ENCODE measurements at regions of chr5 and their contacts with region 1.

Region 1: GRCh38 chr5:17180957-17181723 is 36.3 kb upstream of the BASP1 start:
- DNase-seq: peak; percentile 74
- H3K4me3 ChIP-seq: no peak overlapping the region
- H3K27ac ChIP-seq: peak overlapping the region; percentile 25
- H3K4me1 ChIP-seq: peaks cover 9% of the 10 kb centered on the region
- H3K27me3 ChIP-seq: no peaks in the 10 kb centered on the region
- CTCF ChIP-seq: no peak
- POLR2A ChIP-seq: no peak

Region 2: GRCh38 chr5:17157916-17158529 is 23.1 kb before region 1 on chr5:
- CTCF ChIA-PET with region 1: no interaction called
- POLR2A ChIA-PET with region 1: no interaction called
- dilution Hi-C with region 1: no loop called
- intact Hi-C with region 1: loop called (anchors 1 kb)
- DNase-seq: peak; percentile 69
- H3K4me3 ChIP-seq: no peak overlapping the region
- H3K27ac ChIP-seq: no peak overlapping the region
- H3K4me1 ChIP-seq: peaks cover 18% of the 10 kb centered on the region
- H3K27me3 ChIP-seq: no peaks in the 10 kb centered on the region
- CTCF ChIP-seq: no peak
- POLR2A ChIP-seq: no peak

Region 3: DNA sequence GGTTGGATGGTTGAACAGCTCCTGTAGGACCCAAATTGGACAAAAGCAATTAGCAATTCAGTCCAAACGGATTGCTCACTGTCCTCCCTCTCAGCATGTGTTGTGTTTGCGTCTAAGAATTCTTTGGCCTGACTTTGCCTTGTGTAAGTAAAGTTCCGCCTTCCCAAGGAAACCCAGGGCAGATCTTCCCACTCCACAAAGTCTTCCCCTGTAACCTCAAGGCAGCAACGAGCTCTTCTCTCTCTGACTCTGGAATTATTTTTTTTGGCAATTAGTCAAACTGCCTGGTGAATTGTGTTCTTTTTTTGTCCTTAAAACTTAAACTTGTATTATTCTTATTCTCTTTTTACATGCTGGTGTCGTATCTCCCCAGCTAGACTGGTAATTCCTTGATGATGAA is 15.6 kb after region 1 on chr5:
- CTCF ChIA-PET with region 1: no interaction called
- POLR2A ChIA-PET with region 1: no interaction called
- dilution Hi-C with region 1: no loop called
- intact Hi-C with region 1: no loop called
- DNase-seq: peak; percentile 18
- H3K4me3 ChIP-seq: no peak overlapping the region
- H3K27ac ChIP-seq: no peak overlapping the region
- H3K4me1 ChIP-seq: no peaks in the 10 kb centered on the region
- H3K27me3 ChIP-seq: no peaks in the 10 kb centered on the region
- CTCF ChIP-seq: no peak
- POLR2A ChIP-seq: no peak

Region 4: GRCh38 chr5:17238521-17239041 is 57.4 kb after region 1 on chr5:
- CTCF ChIA-PET with region 1: no interaction called
- POLR2A ChIA-PET with region 1: no interaction called
- dilution Hi-C with region 1: no loop called
- intact Hi-C with region 1: no loop called
- DNase-seq: peak; percentile 72
- H3K4me3 ChIP-seq: peak overlapping the region in 1 of 3 experiments; percentile 28
- H3K27ac ChIP-seq: peak overlapping the region; percentile 77
- H3K4me1 ChIP-seq: peaks cover 34% of the 10 kb centered on the region
- H3K27me3 ChIP-seq: no peaks in the 10 kb centered on the region
- CTCF ChIP-seq: no peak
- POLR2A ChIP-seq: no peak

Region 5: GRCh38 chr5:17326600-17327037 is 145.5 kb after region 1 on chr5:
- CTCF ChIA-PET with region 1: no interaction called
- POLR2A ChIA-PET with region 1: no interaction called
- dilution Hi-C with region 1: no loop called
- intact Hi-C with region 1: no loop called
- DNase-seq: no peak
- H3K4me3 ChIP-seq: no peak overlapping the region
- H3K27ac ChIP-seq: no peak overlapping the region
- H3K4me1 ChIP-seq: no peaks in the 10 kb centered on the region
- H3K27me3 ChIP-seq: no peaks in the 10 kb centered on the region
- CTCF ChIP-seq: no peak
- POLR2A ChIP-seq: no peak

Measured in endothelial cell of umbilical vein (primary cell).